Mammary epithelial cell (primary cell): ENCODE measurements at regions of chr1 and their contacts with region 1.

Region 1: DNA sequence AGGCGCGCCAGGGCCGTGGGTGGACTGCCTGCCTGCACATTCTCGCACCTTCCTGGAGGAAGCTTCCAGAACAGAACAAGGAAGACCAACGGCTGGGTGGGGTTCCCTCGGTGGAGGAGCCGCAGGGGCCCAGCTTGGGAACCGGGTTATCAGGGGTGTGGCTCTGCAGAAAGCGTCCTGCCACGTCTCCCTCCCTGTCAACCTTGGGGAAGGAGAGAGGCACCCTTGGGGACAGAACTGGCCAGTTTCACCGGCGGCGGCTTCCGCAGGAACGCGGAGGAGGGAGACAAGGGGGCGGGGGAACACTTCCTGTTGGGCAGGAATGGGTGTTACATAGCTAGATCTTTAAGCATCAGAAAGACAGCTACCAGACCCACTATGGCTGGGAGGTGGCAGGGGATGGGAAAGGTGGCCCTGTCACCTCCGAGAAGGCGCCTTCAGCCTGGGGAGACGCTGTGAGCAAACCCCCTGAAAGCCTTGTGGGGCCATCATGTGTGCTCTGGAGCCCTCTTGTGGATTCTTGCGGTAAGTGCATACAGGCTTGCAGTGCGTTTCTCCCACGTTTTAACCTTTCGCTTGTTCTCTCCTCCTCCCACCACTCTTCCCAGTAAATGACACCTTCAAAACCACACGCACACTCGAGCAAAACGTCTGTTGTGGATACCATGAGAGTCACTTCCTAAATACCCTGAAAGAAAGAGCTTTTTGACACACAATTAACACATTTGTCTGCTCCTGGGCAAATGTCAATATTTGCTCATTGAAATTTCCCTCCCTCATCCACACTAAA is 3.8 kb upstream of the PLEKHA6 start:
- DNase-seq: peak; percentile 59
- H3K4me3 ChIP-seq: peak overlapping the region; percentile 36 to 53 (median 41)
- H3K27ac ChIP-seq: peak overlapping the region; percentile 6
- H3K4me1 ChIP-seq: peaks cover 7% of the 10 kb centered on the region
- H3K27me3 ChIP-seq: no peaks in the 10 kb centered on the region
- CTCF ChIP-seq: peak; percentile 96 to 98

Region 2: DNA sequence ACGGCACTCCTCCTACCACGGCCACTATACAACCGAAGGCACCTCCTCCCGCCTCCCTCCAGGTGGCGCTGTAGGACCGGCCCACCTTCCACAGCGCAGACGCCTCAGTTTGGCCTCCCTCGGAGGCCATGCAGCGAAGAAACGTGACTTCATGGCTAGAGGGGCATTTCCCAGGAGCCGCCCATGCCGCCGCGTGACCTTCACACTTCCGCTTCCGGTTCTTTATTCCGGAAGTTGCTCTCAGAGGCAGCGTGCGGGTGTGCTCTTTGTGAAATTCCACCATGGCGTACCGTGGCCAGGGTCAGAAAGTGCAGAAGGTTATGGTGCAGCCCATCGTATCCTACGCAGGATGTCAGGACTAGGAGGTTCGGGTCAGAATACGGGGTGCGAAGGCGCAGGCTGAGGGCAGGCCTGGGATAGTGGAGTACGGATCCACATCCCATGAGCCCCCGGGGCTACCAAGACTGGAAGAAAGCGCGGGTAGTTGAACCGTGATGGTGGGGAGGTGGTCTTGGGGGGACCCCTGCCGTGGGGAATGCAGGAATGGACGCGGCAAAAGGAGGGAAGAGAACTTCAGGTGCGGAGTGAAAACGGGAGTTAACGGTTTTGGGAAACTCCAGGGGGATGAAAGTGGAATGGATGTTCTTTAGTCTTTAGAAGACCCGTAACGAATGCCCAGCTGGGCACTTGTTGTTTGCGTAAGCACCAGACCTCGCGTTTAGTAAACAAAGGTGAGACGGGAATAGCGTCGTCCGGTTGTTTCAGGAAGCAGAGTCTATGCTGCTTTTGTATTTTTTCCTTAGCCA is 501.9 kb before region 1 on chr1 and contains the start of gene SNRPE:
- CTCF ChIA-PET with region 1: no interaction called
- dilution Hi-C with region 1: no loop called
- in situ Hi-C with region 1: loop called in 1 of 2 experiments (anchors 25 kb)
- intact Hi-C with region 1: loop called (anchors 1 kb)
- DNase-seq: peak; percentile 97
- H3K4me3 ChIP-seq: peak within 1 kb of the TSS; percentile 59 to 92 (median 74)
- H3K27ac ChIP-seq: peak within 1 kb of the TSS; percentile 82
- H3K4me1 ChIP-seq: peaks cover 22% of the 10 kb centered on the region
- H3K27me3 ChIP-seq: no peaks in the 10 kb centered on the region
- CTCF ChIP-seq: peak; percentile 80 to 94
- total RNA-seq, gene SNRPE: 21.7 to 131 TPM

Region 3: DNA sequence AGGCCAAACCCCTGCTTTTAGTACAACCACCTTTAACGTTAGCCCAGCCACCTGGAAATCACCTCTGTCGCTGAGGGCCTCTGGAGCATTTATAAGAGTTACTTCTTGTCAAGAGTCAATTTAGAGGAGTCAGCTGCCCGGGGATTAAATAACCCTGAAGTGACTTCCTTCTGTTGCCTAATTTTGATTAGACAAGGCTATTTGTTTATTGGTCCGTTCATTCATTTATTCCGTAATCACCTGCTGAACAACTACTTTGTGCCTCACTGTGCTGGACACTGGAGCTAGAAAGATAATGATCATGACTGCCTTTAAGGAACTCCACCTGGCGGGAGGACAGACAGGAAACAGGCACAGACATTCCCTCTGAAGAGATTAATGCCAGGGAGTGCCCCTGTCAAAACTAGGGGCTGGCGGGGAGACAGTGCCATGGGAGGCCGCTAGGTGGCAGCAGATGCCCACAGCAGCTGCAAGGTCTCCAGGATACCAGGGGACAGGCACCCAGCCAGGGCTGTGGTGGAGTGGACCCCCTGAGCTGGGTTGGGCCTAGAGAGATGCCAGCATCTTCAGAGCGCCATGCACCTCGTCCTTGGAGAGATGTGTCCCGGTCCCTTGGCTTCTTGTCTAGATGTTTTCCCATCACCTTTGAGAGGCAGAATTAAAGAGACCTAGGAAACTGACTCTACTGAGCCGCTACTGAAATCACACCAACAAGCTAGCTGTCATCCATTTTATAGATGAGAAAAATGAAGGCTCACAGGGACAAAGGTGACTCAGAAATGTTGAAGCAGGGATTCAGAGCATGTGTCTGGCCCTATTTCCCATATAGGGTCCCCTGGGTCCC is 201.1 kb before region 1 on chr1:
- CTCF ChIA-PET with region 1: no interaction called
- dilution Hi-C with region 1: no loop called
- in situ Hi-C with region 1: loop called in 1 of 2 experiments (anchors 10 kb)
- intact Hi-C with region 1: loop called (anchors 1 kb)
- DNase-seq: peak; percentile 75
- H3K4me3 ChIP-seq: no peak overlapping the region
- H3K27ac ChIP-seq: no peak overlapping the region
- H3K4me1 ChIP-seq: peaks cover 10% of the 10 kb centered on the region
- H3K27me3 ChIP-seq: no peaks in the 10 kb centered on the region
- CTCF ChIP-seq: peak; percentile 99

Region 4: GRCh38 chr1:204257954-204258752 is 105.4 kb before region 1 on chr1:
- CTCF ChIA-PET with region 1: no interaction called
- dilution Hi-C with region 1: loop called (anchors 5 kb)
- in situ Hi-C with region 1: loop called in 1 of 2 experiments (anchors 10 kb)
- intact Hi-C with region 1: loop called (anchors 1 kb)
- DNase-seq: peak; percentile 15
- H3K4me3 ChIP-seq: no peak overlapping the region
- H3K27ac ChIP-seq: no peak overlapping the region
- H3K4me1 ChIP-seq: no peaks in the 10 kb centered on the region
- H3K27me3 ChIP-seq: no peaks in the 10 kb centered on the region
- CTCF ChIP-seq: peak; percentile 68 to 84

Region 5: DNA sequence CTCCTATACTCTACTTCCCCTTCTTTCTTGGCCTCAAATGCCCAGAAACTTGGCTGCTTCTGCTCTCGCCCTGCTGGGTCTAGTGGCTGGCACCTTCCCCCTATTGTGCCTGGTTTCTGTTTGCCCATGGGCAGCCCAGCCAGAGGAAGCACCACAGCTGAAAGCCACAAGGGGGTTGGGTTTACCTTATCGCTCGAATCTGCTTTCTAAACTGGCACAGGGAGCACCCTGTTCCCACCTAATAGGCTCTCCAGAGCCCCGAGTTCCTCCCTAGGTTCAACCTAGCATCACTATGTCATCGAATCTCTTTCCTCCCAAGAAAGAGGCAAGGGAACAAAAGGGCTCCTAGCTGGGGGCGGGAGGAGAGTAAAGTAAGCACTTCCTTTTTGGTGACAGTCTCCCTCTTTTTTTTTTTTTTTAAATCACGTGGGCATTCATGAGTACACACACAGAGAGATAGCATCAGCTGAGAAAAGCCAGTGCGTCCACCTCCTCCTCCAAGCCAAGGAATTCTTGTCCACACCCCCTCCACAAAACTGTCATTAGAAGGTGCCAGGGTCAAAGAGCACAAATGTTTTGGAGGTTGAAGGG is 76.6 kb before region 1 on chr1:
- CTCF ChIA-PET with region 1: no interaction called
- dilution Hi-C with region 1: no loop called
- in situ Hi-C with region 1: no loop called
- intact Hi-C with region 1: loop called (anchors 1 kb)
- DNase-seq: peak; percentile 33
- H3K4me3 ChIP-seq: peak overlapping the region; percentile 41 to 55 (median 44)
- H3K27ac ChIP-seq: peak overlapping the region; percentile 62
- H3K4me1 ChIP-seq: peaks cover 29% of the 10 kb centered on the region
- H3K27me3 ChIP-seq: no peaks in the 10 kb centered on the region
- CTCF ChIP-seq: peak in 1 of 2 donors; percentile 11

Region 6: DNA sequence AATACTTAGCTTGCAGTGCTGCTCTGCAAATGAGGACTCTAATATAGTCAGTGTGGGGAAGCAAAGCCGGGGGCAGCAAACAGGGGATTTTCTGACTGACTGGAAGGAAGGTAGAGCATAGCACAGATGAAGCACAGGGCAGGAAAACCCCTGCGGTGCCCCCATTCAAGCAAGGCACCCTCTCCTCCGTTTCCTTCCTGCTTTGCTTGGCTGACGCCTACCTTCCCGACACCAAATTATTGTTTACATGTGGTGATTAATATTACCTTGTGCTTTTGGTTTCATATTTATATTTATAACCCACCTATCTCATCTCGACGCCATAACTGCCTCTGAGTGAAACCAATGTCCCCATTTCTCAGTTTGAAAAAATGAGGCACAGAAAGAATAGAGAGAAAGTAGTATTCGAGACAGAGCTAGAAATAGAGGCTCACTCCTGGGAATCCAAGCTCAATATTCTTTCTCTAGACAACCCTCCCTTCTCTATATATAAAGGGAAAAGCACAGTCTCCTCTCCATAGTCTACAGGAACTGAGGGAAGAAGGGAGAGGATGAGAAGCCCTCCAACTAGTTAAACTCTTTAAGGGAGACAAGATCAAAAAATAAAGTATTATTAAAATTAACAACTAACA is 89.7 kb after region 1 on chr1:
- CTCF ChIA-PET with region 1: no interaction called
- dilution Hi-C with region 1: no loop called
- in situ Hi-C with region 1: no loop called
- intact Hi-C with region 1: no loop called
- DNase-seq: no peak
- H3K4me3 ChIP-seq: no peak overlapping the region
- H3K27ac ChIP-seq: no peak overlapping the region
- H3K4me1 ChIP-seq: peaks cover 5% of the 10 kb centered on the region
- H3K27me3 ChIP-seq: no peaks in the 10 kb centered on the region
- CTCF ChIP-seq: no peak